Right cardiac atrium (tissue), 5 donors: ENCODE measurements at regions of chr5 and their contacts with region 1.

Region 1: DNA sequence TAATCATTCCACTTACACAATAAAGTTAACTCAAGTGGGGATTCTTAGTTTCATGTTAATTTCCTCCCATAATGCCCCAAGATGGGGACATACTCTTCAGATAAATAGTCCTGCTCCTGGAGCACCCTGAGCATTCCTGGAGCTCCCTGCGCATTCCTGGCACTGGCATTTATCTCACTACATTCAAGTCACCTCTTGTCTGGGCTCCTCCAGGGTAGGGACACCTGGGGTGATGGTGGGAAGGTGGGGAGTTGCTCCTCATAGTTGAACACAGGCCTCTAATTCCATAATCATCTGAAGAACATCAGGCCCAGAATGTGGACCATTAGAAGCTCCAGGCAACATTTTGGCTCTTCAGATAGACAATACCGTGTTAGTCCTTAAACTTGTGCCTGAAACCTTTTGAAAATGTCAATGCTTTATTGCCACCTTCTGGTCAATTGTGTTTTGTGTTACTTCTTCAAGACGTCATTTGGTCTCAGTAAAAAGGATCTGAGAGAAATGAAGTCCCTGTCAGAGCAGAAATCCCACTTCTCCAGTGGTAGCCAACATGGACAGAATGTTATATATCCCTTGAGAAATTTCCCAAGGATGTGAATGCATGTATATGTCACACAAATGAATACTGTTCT is 14.2 kb upstream of the AGGF1 start:
- DNase-seq: no peak
- ATAC-seq: peak; percentile 36 to 47
- H3K4me3 ChIP-seq: no peak overlapping the region
- H3K27ac ChIP-seq: no peak overlapping the region
- H3K4me1 ChIP-seq: no peaks in the 10 kb centered on the region
- H3K27me3 ChIP-seq: no peaks in the 10 kb centered on the region

Region 2: GRCh38 chr5:76114179-76114851 is 901.7 kb before region 1 on chr5:
- intact Hi-C with region 1: no loop called
- DNase-seq: peak in 2 of 3 donors; percentile 20 to 43
- ATAC-seq: peak; percentile 74 to 92
- H3K4me3 ChIP-seq: no peak overlapping the region
- H3K27ac ChIP-seq: no peak overlapping the region
- H3K4me1 ChIP-seq: no peaks in the 10 kb centered on the region
- H3K27me3 ChIP-seq: no peaks in the 10 kb centered on the region

Region 3: GRCh38 chr5:76601470-76601869 is 414.6 kb before region 1 on chr5:
- intact Hi-C with region 1: loop called in 2 of 4 experiments (anchors 10 kb)
- DNase-seq: no peak
- ATAC-seq: peak; percentile 64 to 73
- H3K4me3 ChIP-seq: no peak overlapping the region
- H3K27ac ChIP-seq: no peak overlapping the region
- H3K4me1 ChIP-seq: no peaks in the 10 kb centered on the region
- H3K27me3 ChIP-seq: no peaks in the 10 kb centered on the region

Region 4: GRCh38 chr5:76867827-76868693 is 148.0 kb before region 1 on chr5:
- intact Hi-C with region 1: loop called (anchors 2 to 10 kb)
- DNase-seq: peak; percentile 54 to 76 (median 74)
- ATAC-seq: peak; percentile 88 to 90
- H3K4me3 ChIP-seq: no peak overlapping the region
- H3K27ac ChIP-seq: no peak overlapping the region
- H3K4me1 ChIP-seq: no peaks in the 10 kb centered on the region
- H3K27me3 ChIP-seq: no peaks in the 10 kb centered on the region

Region 5: GRCh38 chr5:76874088-76874581 is 141.9 kb before region 1 on chr5:
- intact Hi-C with region 1: loop called (anchors 2 to 10 kb)
- DNase-seq: no peak
- ATAC-seq: peak in 1 of 2 donors; percentile 23
- H3K4me3 ChIP-seq: no peak overlapping the region
- H3K27ac ChIP-seq: no peak overlapping the region
- H3K4me1 ChIP-seq: no peaks in the 10 kb centered on the region
- H3K27me3 ChIP-seq: no peaks in the 10 kb centered on the region